PC-3 (cell line): ENCODE measurements at regions of chr2 and their contacts with region 1.

Region 1: DNA sequence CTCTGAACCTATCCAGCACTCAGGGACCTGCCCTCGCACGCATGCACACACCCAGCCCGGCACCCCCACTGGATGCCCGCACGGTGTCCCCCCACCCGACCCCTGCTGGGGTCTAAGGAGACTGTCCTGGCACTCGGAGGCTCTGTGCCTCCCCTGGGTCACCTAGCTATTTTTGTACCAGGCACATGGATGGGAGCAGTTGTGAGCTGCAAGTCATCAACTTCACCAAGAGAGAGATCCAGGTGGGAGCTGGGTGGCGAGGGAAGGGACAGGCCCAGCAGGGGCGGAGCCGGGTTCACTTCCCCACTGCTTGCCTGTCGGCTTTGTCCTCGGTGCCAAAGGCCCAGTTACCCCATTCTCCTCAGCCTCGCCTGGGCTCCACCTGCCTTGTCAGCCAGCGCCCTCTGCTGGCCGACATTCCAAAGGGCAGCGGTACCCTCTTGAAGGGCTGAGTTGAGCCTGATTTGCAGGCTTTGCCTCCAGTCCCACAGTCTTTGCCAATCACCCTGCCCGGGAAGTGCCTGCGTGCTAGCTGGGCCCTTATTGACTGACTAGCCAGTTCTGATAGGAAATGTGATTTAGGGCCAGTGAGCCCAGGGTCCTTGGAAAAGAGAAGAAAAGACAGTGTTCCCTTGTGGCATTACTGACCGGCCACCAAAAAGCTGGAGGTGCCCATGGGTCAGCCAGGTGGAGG is 5.8 kb downstream of the NT5DC4 start:
- DNase-seq: peak; percentile 99
- ATAC-seq: peak; percentile 92
- H3K4me3 ChIP-seq: no peak overlapping the region
- H3K27ac ChIP-seq: peak overlapping the region; percentile 80
- H3K4me1 ChIP-seq: peaks cover 16% of the 10 kb centered on the region
- H3K27me3 ChIP-seq: no peaks in the 10 kb centered on the region
- CTCF ChIP-seq: peak; percentile 94

Region 2: GRCh38 chr2:112216166-112216565 is 510.5 kb before region 1 on chr2:
- CTCF ChIA-PET with region 1: no interaction called
- POLR2A ChIA-PET with region 1: no interaction called
- intact Hi-C with region 1: no loop called
- DNase-seq: peak; percentile 26
- ATAC-seq: peak; percentile 67
- H3K4me3 ChIP-seq: no peak overlapping the region
- H3K27ac ChIP-seq: no peak overlapping the region
- H3K4me1 ChIP-seq: no peaks in the 10 kb centered on the region
- H3K27me3 ChIP-seq: no peaks in the 10 kb centered on the region
- CTCF ChIP-seq: peak; percentile 58

Region 3: GRCh38 chr2:112584134-112584890 is 142.3 kb before region 1 on chr2 and contains the start of gene CHCHD5:
- CTCF ChIA-PET with region 1: no interaction called
- POLR2A ChIA-PET with region 1: no interaction called
- intact Hi-C with region 1: loop called (anchors 1 kb)
- DNase-seq: peak; percentile 94
- ATAC-seq: peak; percentile 83
- H3K4me3 ChIP-seq: peak within 1 kb of the TSS; percentile 86
- H3K27ac ChIP-seq: peak within 1 kb of the TSS; percentile 95
- H3K4me1 ChIP-seq: peaks cover 31% of the 10 kb centered on the region
- H3K27me3 ChIP-seq: no peaks in the 10 kb centered on the region
- CTCF ChIP-seq: no peak
- total RNA-seq, gene CHCHD5: 25.4 and 27.9 TPM in 2 replicates

Region 4: GRCh38 chr2:112618383-112618782 is 108.3 kb before region 1 on chr2:
- CTCF ChIA-PET with region 1: interaction called, 3 read pairs
- POLR2A ChIA-PET with region 1: interaction called, 16 read pairs
- intact Hi-C with region 1: no loop called
- DNase-seq: no peak
- ATAC-seq: no peak
- H3K4me3 ChIP-seq: no peak overlapping the region
- H3K27ac ChIP-seq: no peak overlapping the region
- H3K4me1 ChIP-seq: peaks cover 26% of the 10 kb centered on the region
- H3K27me3 ChIP-seq: no peaks in the 10 kb centered on the region
- CTCF ChIP-seq: no peak

Region 5: DNA sequence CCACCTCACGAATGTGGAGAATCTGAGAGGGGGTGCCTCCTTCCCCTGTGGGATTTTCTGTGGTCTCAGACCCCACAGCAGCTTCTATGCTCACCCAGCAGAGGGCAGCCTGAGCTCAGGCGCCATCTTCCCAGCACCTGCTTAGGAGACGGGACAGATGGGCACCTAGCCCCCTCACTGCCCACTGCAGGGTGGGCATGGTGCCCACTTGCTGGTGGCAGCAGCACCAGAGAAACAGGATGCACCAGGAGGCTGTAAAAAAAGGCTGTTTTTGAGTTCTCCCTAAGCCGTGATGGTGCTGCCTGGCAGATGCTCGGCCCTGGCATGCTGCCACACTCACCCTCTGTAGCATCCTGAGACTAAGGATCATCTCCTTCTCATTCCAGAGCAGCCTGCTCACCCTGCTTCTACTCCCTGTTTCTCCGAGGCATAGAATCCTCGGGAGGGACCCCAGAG is 100.0 kb before region 1 on chr2:
- CTCF ChIA-PET with region 1: interaction called, 5 read pairs
- POLR2A ChIA-PET with region 1: no interaction called
- intact Hi-C with region 1: loop called (anchors 1 kb)
- DNase-seq: peak; percentile 72
- ATAC-seq: peak; percentile 37
- H3K4me3 ChIP-seq: peak overlapping the region; percentile 47; the same call in 1 of the 2 replicates
- H3K27ac ChIP-seq: peak overlapping the region; percentile 94
- H3K4me1 ChIP-seq: peaks cover 93% of the 10 kb centered on the region
- H3K27me3 ChIP-seq: no peaks in the 10 kb centered on the region
- CTCF ChIP-seq: peak; percentile 95

Region 6: GRCh38 chr2:112645310-112646101 is 81.1 kb before region 1 on chr2 and contains the start of gene SLC20A1:
- CTCF ChIA-PET with region 1: no interaction called
- POLR2A ChIA-PET with region 1: interaction called, 4 read pairs
- intact Hi-C with region 1: loop called (anchors 5 kb)
- DNase-seq: peak; percentile 96
- ATAC-seq: peak; percentile 68
- H3K4me3 ChIP-seq: peak within 1 kb of the TSS; percentile 78
- H3K27ac ChIP-seq: peak within 1 kb of the TSS; percentile 92
- H3K4me1 ChIP-seq: peaks cover 68% of the 10 kb centered on the region
- H3K27me3 ChIP-seq: no peaks in the 10 kb centered on the region
- CTCF ChIP-seq: 0 out of 2 replicates have a peak, but pooled peaks have one; percentile 32
- total RNA-seq, gene SLC20A1: 209 and 257 TPM in 2 replicates

Region 7: GRCh38 chr2:112666764-112667122 is 59.9 kb before region 1 on chr2:
- CTCF ChIA-PET with region 1: no interaction called
- POLR2A ChIA-PET with region 1: no interaction called
- intact Hi-C with region 1: loop called (anchors 5 kb)
- DNase-seq: peak; percentile 51
- ATAC-seq: peak; percentile 27
- H3K4me3 ChIP-seq: no peak overlapping the region
- H3K27ac ChIP-seq: no peak overlapping the region
- H3K4me1 ChIP-seq: peaks cover 16% of the 10 kb centered on the region
- H3K27me3 ChIP-seq: no peaks in the 10 kb centered on the region
- CTCF ChIP-seq: no peak

Region 8: DNA sequence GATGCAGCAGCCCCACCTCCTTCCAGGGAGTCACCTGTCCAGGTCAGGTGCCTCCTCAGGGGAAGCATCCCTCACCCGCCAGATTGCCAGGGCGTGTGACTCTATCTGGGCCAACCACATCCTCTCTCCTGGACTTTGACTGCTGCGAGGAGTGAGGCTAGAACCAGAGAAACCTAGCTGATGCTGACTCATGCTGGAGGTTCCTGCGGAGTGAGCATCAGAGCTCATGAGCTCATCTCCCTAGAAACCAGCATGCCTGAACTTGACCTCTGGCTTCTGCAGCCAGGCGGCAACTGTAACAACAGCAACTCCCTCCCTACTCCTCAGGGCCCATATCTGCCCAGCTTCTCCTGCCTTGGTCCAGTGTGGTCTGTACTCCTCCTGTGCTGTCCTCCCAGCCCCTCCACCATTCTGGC is 34.1 kb before region 1 on chr2:
- CTCF ChIA-PET with region 1: interaction called, 8 read pairs
- POLR2A ChIA-PET with region 1: interaction called, 3 read pairs
- intact Hi-C with region 1: loop called (anchors 5 kb)
- DNase-seq: peak; percentile 96
- ATAC-seq: peak; percentile 80
- H3K4me3 ChIP-seq: no peak overlapping the region
- H3K27ac ChIP-seq: peak overlapping the region; percentile 66
- H3K4me1 ChIP-seq: peaks cover 49% of the 10 kb centered on the region
- H3K27me3 ChIP-seq: no peaks in the 10 kb centered on the region
- CTCF ChIP-seq: no peak

Region 9: GRCh38 chr2:112850588-112850987 is 123.9 kb after region 1 on chr2:
- CTCF ChIA-PET with region 1: no interaction called
- POLR2A ChIA-PET with region 1: no interaction called
- intact Hi-C with region 1: no loop called
- DNase-seq: no peak
- ATAC-seq: no peak
- H3K4me3 ChIP-seq: no peak overlapping the region
- H3K27ac ChIP-seq: no peak overlapping the region
- H3K4me1 ChIP-seq: no peaks in the 10 kb centered on the region
- H3K27me3 ChIP-seq: no peaks in the 10 kb centered on the region
- CTCF ChIP-seq: no peak

Region 10: GRCh38 chr2:112947374-112947773 is 220.7 kb after region 1 on chr2:
- CTCF ChIA-PET with region 1: no interaction called
- POLR2A ChIA-PET with region 1: no interaction called
- intact Hi-C with region 1: no loop called
- DNase-seq: no peak
- ATAC-seq: no peak
- H3K4me3 ChIP-seq: no peak overlapping the region
- H3K27ac ChIP-seq: no peak overlapping the region
- H3K4me1 ChIP-seq: peaks cover 6% of the 10 kb centered on the region
- H3K27me3 ChIP-seq: no peaks in the 10 kb centered on the region
- CTCF ChIP-seq: no peak